AG04450 (cell line): ENCODE measurements at regions of chr3 and their contacts with region 1.

Region 1: GRCh38 chr3:51982782-51983577 is at the start of gene ACY1:
- DNase-seq: peak; percentile 68
- H3K4me3 ChIP-seq: peak within 1 kb of the TSS; percentile 73
- H3K27ac ChIP-seq: peak within 1 kb of the TSS; percentile 95
- H3K27me3 ChIP-seq: no peaks in the 10 kb centered on the region
- CTCF ChIP-seq: no peak
- polyA plus RNA-seq, gene ACY1: 20.4 and 27.8 TPM in 2 replicates

Region 2: GRCh38 chr3:51995346-51996163 is 12.6 kb after region 1 on chr3 and contains the start of gene RPL29:
- CTCF ChIA-PET with region 1: interaction called, 6 read pairs
- POLR2A ChIA-PET with region 1: interaction called, 29 read pairs
- DNase-seq: peak; percentile 88
- H3K4me3 ChIP-seq: peak within 1 kb of the TSS; percentile 76
- H3K27ac ChIP-seq: peak within 1 kb of the TSS; percentile 88
- H3K27me3 ChIP-seq: peaks cover 6% of the 10 kb centered on the region
- CTCF ChIP-seq: no peak
- polyA plus RNA-seq, gene RPL29: 1,368 and 1,889 TPM in 2 replicates